ENCODE measurements at regions of chr4 and their contacts with region 1.

Region 1: GRCh38 chr4:75666299-75666698 is 6.9 kb downstream of the G3BP2 start:
- DNase-seq: no peak
- ATAC-seq: no peak
- H3K4me3 Mint-ChIP-seq: peak overlapping the region; percentile 41
- H3K27ac Mint-ChIP-seq: peak overlapping the region; percentile 69
- H3K4me1 Mint-ChIP-seq: peaks cover 77% of the 10 kb centered on the region
- H3K27me3 Mint-ChIP-seq: no peaks in the 10 kb centered on the region

Region 2: GRCh38 chr4:75429208-75429607 is 237.1 kb before region 1 on chr4:
- CTCF ChIA-PET with region 1: no interaction called
- POLR2A ChIA-PET with region 1: no interaction called
- DNase-seq: no peak
- ATAC-seq: no peak
- H3K4me3 Mint-ChIP-seq: no peak overlapping the region
- H3K27ac Mint-ChIP-seq: no peak overlapping the region
- H3K4me1 Mint-ChIP-seq: no peaks in the 10 kb centered on the region
- H3K27me3 Mint-ChIP-seq: peaks cover 11% of the 10 kb centered on the region

Region 3: DNA sequence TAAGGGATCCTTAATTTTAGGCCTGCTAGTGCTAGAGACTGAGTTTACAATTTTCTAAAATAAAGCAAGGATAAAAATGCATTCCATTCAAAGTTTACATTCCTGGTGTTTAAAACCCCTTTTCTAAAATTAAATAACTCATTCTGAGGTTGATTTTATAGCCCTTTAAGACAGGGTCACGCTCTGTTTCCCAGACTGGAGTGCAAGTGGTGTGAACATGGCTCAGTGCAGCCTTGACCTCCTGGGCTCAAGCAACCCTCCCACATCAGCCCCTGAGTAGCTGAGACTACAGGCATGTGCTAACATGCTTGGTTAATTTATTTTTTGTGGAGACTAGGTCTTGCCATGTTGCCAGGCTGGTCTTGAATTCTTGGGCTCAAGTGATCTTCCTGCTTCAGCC is 29.1 kb before region 1 on chr4:
- CTCF ChIA-PET with region 1: no interaction called
- POLR2A ChIA-PET with region 1: no interaction called
- DNase-seq: no peak
- ATAC-seq: no peak
- H3K4me3 Mint-ChIP-seq: no peak overlapping the region
- H3K27ac Mint-ChIP-seq: no peak overlapping the region
- H3K4me1 Mint-ChIP-seq: peaks cover 9% of the 10 kb centered on the region
- H3K27me3 Mint-ChIP-seq: peaks cover 2% of the 10 kb centered on the region

Region 4: DNA sequence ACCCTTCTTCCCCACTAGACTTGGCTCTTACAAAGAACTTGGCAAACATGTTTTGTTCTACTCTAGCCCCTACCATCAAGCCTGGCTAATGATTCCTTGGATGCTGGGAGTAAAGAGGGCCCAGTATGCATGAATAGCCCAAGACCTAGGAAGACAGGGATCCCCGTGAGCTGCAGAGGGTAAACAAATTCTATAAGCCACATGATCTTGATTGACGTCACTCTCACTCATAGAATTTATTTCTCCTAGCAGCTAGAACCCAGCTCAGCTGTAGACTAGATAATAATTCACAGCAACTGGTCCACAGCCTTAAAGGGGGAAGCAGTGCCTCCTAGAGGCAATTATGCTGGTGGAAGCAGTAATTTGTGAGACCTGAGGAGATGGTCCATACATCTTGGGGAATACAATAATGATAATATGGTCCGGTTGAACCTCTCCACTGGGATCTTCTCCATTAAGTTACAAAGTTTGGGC is 42.0 kb after region 1 on chr4:
- CTCF ChIA-PET with region 1: interaction called, 29 read pairs
- POLR2A ChIA-PET with region 1: no interaction called
- DNase-seq: peak; percentile 69
- ATAC-seq: peak; percentile 92
- H3K4me3 Mint-ChIP-seq: no peak overlapping the region
- H3K27ac Mint-ChIP-seq: no peak overlapping the region
- H3K4me1 Mint-ChIP-seq: peaks cover 20% of the 10 kb centered on the region
- H3K27me3 Mint-ChIP-seq: no peaks in the 10 kb centered on the region

Region 5: GRCh38 chr4:76055016-76055415 is 388.7 kb after region 1 on chr4:
- CTCF ChIA-PET with region 1: no interaction called
- POLR2A ChIA-PET with region 1: no interaction called
- DNase-seq: no peak
- ATAC-seq: peak; percentile 39
- H3K4me3 Mint-ChIP-seq: no peak overlapping the region
- H3K27ac Mint-ChIP-seq: peak overlapping the region; percentile 13
- H3K4me1 Mint-ChIP-seq: peaks cover 22% of the 10 kb centered on the region
- H3K27me3 Mint-ChIP-seq: peaks cover 2% of the 10 kb centered on the region